ENCODE measurements at regions of chr16 and their contacts with region 1.

Region 1: GRCh38 chr16:51237861-51238378 is 86.8 kb upstream of the SALL1 start:
- DNase-seq: no peak
- ATAC-seq: no peak
- H3K4me3 ChIP-seq: no peak overlapping the region
- H3K27ac ChIP-seq: no peak overlapping the region
- H3K4me1 ChIP-seq: no peaks in the 10 kb centered on the region
- H3K27me3 ChIP-seq: no peaks in the 10 kb centered on the region
- CTCF ChIP-seq: no peak

Region 2: GRCh38 chr16:51184702-51185433 is 53.1 kb before region 1 on chr16:
- intact Hi-C with region 1: loop called in 1 of 2 experiments (anchors 1 kb)
- DNase-seq: no peak
- ATAC-seq: no peak
- H3K4me3 ChIP-seq: no peak overlapping the region
- H3K27ac ChIP-seq: no peak overlapping the region
- H3K4me1 ChIP-seq: no peaks in the 10 kb centered on the region
- H3K27me3 ChIP-seq: no peaks in the 10 kb centered on the region
- CTCF ChIP-seq: no peak

Region 3: DNA sequence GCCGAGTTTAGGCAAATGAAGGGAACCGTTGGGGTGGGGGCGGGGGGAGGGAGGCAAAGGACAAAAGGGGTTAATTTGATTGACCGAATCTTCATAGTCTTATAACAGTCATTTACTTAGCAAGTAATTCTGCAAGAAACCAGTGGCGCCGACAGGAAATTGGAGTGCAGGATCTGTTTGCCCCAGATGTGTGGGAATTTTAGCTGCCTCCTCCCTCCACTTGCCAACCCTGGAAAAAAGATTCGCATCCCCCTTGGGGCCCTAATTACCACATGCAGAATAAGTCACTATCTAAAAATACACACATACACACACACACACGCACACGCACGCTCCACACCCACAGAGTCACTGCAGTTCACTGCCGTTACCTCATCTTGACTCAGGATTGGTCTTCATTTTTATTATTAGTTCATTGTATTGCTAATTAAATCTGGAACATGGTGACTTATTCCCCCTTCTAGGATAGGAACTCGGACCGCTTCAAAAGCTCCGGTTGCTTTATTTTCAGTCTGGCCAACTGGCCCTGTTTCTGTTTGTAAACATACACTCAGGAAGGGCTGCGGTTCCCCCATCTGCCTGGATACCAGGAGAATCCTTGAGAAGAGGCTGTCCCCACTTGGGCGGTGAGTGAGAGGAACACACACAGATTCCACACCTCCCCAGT is 154.7 kb after region 1 on chr16:
- intact Hi-C with region 1: no loop called
- DNase-seq: peak; percentile 12 to 52
- ATAC-seq: peak in 2 of 4 donors; percentile 49 to 54
- H3K4me3 ChIP-seq: no peak overlapping the region
- H3K27ac ChIP-seq: no peak overlapping the region
- H3K4me1 ChIP-seq: no peaks in the 10 kb centered on the region
- H3K27me3 ChIP-seq: peaks cover 0 to 3% (median 0%) of the 10 kb centered on the region in 3 donors
- CTCF ChIP-seq: no peak

Region 4: DNA sequence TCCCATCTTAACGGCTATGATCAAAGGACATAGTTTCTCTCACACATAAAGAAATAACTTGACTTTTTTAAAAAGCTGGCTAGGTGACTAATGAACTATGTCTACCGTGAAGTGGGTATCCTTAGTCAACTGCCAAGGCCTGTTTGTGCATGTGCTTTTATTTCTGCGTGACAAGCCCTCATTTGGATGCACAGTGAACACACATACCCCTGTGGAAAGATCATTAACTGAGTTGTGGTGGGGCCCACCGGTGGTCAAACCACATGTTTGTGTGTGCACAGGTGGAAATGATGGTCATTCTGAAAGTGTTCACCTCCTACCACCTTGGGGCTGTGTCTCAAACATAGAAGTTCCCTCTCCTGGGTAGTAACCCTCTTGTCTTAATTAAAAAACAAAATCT is 169.3 kb after region 1 on chr16:
- intact Hi-C with region 1: no loop called
- DNase-seq: no peak
- ATAC-seq: no peak
- H3K4me3 ChIP-seq: no peak overlapping the region
- H3K27ac ChIP-seq: no peak overlapping the region
- H3K4me1 ChIP-seq: no peaks in the 10 kb centered on the region
- H3K27me3 ChIP-seq: no peaks in the 10 kb centered on the region
- CTCF ChIP-seq: no peak